ENCODE measurements at regions of chr6 and their contacts with region 1.

Region 1: GRCh38 chr6:85404502-85405174 is 45.2 kb upstream of the NT5E start:
- DNase-seq: no peak
- ATAC-seq: peak; percentile 11; the same call in 2 of the 3 replicates
- H3K4me3 ChIP-seq: no peak overlapping the region
- H3K27ac ChIP-seq: no peak overlapping the region
- H3K4me1 ChIP-seq: peaks cover 20% of the 10 kb centered on the region
- H3K27me3 ChIP-seq: no peaks in the 10 kb centered on the region
- CTCF ChIP-seq: no peak
- EP300 ChIP-seq: no peak
- POLR2A ChIP-seq: no peak
- RAD21 ChIP-seq: no peak

Region 2: DNA sequence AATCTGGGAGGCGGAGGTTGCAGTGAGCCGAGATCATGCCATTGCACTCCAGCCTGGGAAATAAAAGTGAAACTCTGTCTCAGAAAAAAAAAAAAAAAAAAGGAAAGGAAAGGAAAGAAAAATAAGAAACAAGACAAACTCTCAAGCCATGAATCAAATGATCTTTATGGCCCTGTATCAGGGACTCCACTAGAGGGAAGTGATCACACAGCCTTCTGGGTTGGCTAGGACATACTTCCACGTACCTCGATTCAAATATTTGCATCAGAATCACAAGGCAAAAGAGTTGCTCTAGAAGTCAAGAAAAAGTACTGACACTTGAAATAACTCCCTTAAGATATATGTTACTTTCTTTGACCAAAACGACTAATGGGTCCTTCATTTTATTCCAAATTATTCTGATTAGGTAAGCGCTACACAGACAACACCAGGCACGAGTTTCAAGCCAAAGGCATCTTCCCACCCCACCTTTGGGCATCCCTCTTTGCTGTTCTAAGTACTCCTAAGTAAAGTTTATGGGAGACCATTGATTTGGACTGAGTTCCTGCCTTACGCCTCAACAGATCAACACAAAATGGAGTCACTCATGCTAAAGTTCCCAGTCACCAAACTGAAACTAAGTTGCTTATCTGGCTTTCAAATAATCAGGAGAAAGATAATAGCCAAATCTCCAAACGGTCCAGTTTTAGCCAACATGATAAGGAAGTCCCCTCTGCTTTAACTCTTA is 32.3 kb before region 1 on chr6:
- CTCF ChIA-PET with region 1: interaction called, 3 read pairs
- POLR2A ChIA-PET with region 1: interaction called, 7 read pairs
- RAD21 ChIA-PET with region 1: no interaction called
- SMC1A ChIA-PET with region 1: interaction called, 5 read pairs
- in situ Hi-C with region 1: no loop called
- intact Hi-C with region 1: loop called (anchors 5 kb)
- DNase-seq: no peak
- ATAC-seq: peak; percentile 76
- H3K4me3 ChIP-seq: no peak overlapping the region
- H3K27ac ChIP-seq: no peak overlapping the region
- H3K4me1 ChIP-seq: no peaks in the 10 kb centered on the region
- H3K27me3 ChIP-seq: no peaks in the 10 kb centered on the region
- CTCF ChIP-seq: peak; percentile 19 to 45 (median 34); a peak in 4 of 6 replicates
- EP300 ChIP-seq: no peak
- POLR2A ChIP-seq: no peak
- RAD21 ChIP-seq: peak; percentile 63

Region 3: GRCh38 chr6:85419046-85419759 is 14.6 kb after region 1 on chr6:
- CTCF ChIA-PET with region 1: interaction called, 5 read pairs
- POLR2A ChIA-PET with region 1: interaction called, 3 read pairs
- RAD21 ChIA-PET with region 1: interaction called, 34 read pairs
- SMC1A ChIA-PET with region 1: interaction called, 10 read pairs
- in situ Hi-C with region 1: no loop called
- intact Hi-C with region 1: no loop called
- DNase-seq: no peak
- ATAC-seq: peak; percentile 85
- H3K4me3 ChIP-seq: 0 out of 2 replicates have a peak overlapping the region, but pooled peaks have one; percentile 24
- H3K27ac ChIP-seq: 0 out of 2 replicates have a peak overlapping the region, but pooled peaks have one; percentile 15
- H3K4me1 ChIP-seq: peaks cover 9% of the 10 kb centered on the region
- H3K27me3 ChIP-seq: no peaks in the 10 kb centered on the region
- CTCF ChIP-seq: no peak
- EP300 ChIP-seq: peak in 1 of 2 experiments; percentile 74; a peak in 1 of 4 replicates
- POLR2A ChIP-seq: no peak
- RAD21 ChIP-seq: no peak

Region 4: GRCh38 chr6:85544776-85545175 is 140.1 kb after region 1 on chr6:
- CTCF ChIA-PET with region 1: no interaction called
- POLR2A ChIA-PET with region 1: no interaction called
- RAD21 ChIA-PET with region 1: no interaction called
- SMC1A ChIA-PET with region 1: no interaction called
- in situ Hi-C with region 1: no loop called
- intact Hi-C with region 1: no loop called
- DNase-seq: no peak
- ATAC-seq: no peak
- H3K4me3 ChIP-seq: no peak overlapping the region
- H3K27ac ChIP-seq: no peak overlapping the region
- H3K4me1 ChIP-seq: no peaks in the 10 kb centered on the region
- H3K27me3 ChIP-seq: no peaks in the 10 kb centered on the region
- CTCF ChIP-seq: no peak
- EP300 ChIP-seq: no peak
- POLR2A ChIP-seq: no peak
- RAD21 ChIP-seq: no peak